GM10248 (cell line): ENCODE measurements at regions of chr11 and their contacts with region 1.

Region 1: DNA sequence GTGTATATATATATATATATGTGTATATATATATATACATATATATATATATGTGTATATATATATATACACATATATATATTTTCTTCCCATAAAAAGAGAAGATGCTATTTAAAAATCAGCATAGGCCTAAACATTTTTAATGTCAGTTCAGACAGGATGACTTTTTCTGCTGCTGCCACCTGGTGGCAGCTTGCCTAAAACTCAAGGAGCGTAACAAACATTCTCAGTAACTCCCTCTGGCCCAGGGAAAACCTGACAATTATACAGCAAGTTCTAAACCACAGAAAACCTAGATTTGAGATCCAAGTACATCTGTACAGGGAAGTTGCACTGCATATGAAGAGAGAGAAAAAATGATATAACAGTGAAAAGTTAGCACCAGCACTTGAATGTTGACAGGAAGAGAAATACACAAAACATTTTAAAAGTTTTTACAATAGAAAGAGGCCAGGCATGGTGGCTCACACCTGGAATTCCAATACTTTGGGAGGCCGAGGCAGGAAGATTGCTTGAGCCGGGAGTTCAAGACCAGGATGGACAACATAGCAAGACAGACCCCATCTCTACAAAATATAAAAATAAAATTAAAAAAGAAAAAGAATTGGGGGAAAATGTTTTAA is 16.6 kb downstream of the OR8A1 start:
- DNase-seq: peak; percentile 28
- CTCF ChIP-seq: peak; percentile 79

Region 2: DNA sequence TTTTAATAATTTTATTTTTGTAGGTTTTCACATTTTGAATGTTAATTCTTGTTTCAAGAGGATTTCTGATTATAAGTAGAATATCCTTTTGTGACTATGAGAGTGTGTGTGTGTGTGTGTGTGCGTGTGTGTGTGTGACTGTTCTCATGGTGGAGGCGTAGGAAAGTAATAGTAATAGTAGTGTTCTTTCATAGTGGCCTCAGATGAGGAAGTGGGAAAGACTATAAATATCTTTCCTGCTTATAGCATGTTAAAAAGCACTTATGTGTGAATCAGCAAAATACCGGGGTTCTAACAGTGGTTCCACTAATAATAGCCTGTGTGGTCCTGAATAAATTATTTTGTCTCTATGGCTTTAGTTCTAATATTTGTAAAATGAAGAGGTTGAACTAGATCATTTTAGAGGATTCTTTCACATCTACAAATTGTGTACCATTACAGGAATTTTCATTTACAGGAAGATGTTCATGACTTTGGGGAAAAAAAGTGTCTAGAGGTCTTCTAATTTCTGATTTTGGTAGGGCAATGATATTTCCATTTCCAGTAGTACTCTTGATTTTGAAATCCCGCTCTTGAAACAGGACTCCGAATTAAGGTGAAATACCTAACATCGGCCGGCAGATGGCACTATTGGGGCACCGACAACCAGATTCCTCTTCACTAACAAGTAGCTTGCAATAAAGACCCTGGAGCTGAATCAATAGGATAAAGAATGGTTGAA is 515.3 kb before region 1 on chr11:
- CTCF ChIA-PET with region 1: interaction called, 20 read pairs
- POLR2A ChIA-PET with region 1: no interaction called
- DNase-seq: peak; percentile 67
- CTCF ChIP-seq: peak; percentile 70

Region 3: GRCh38 chr11:124402326-124402922 is 183.9 kb before region 1 on chr11:
- CTCF ChIA-PET with region 1: interaction called, 20 read pairs
- POLR2A ChIA-PET with region 1: no interaction called
- DNase-seq: peak; percentile 57
- CTCF ChIP-seq: peak; percentile 59

Region 4: GRCh38 chr11:124415356-124415923 is 170.9 kb before region 1 on chr11:
- CTCF ChIA-PET with region 1: interaction called, 13 read pairs
- POLR2A ChIA-PET with region 1: no interaction called
- DNase-seq: peak; percentile 25
- CTCF ChIP-seq: peak; percentile 36

Region 5: GRCh38 chr11:124763156-124763947 is 177.0 kb after region 1 on chr11:
- CTCF ChIA-PET with region 1: no interaction called
- POLR2A ChIA-PET with region 1: no interaction called
- DNase-seq: peak; percentile 70
- CTCF ChIP-seq: peak; percentile 84